Left lung (tissue), 14 donors: ENCODE measurements at regions of chr17 and their contacts with region 1.

Region 1: GRCh38 chr17:39636927-39637736 is at the start of gene STARD3:
- DNase-seq: peak; percentile 85 to 99 (median 93)
- ATAC-seq: peak; percentile 95
- H3K4me3 ChIP-seq: peak within 1 kb of the TSS; percentile 66 to 77
- H3K27ac ChIP-seq: peak within 1 kb of the TSS; percentile 77 to 89
- H3K4me1 ChIP-seq: peaks cover 23 to 76% of the 10 kb centered on the region in 2 donors
- H3K27me3 ChIP-seq: peaks cover 0 to 2% of the 10 kb centered on the region in 2 donors
- CTCF ChIP-seq: peak in 1 of 2 donors; percentile 10
- polyA plus RNA-seq, gene STARD3: 42.1 to 61.5 (median 53.5) TPM

Region 2: GRCh38 chr17:39573447-39574298 is 63.5 kb before region 1 on chr17:
- intact Hi-C with region 1: no loop called
- DNase-seq: peak; percentile 65 to 90 (median 75)
- ATAC-seq: peak; percentile 97
- H3K4me3 ChIP-seq: peak overlapping the region; percentile 51 to 53
- H3K27ac ChIP-seq: peak overlapping the region; percentile 73 to 81
- H3K4me1 ChIP-seq: peaks cover 5 to 14% of the 10 kb centered on the region in 2 donors
- H3K27me3 ChIP-seq: peaks cover 0 to 15% of the 10 kb centered on the region in 2 donors
- CTCF ChIP-seq: no peak

Region 3: GRCh38 chr17:39730095-39730921 is 93.2 kb after region 1 on chr17 and contains the start of gene MIEN1:
- intact Hi-C with region 1: loop called in 1 of 2 experiments (anchors 10 kb)
- DNase-seq: peak; percentile 83 to 98 (median 92)
- ATAC-seq: peak; percentile 98
- H3K4me3 ChIP-seq: peak within 1 kb of the TSS; percentile 75 to 78
- H3K27ac ChIP-seq: peak within 1 kb of the TSS; percentile 89 to 93
- H3K4me1 ChIP-seq: peaks cover 6 to 18% of the 10 kb centered on the region in 2 donors
- H3K27me3 ChIP-seq: peaks cover 0 to 5% of the 10 kb centered on the region in 2 donors
- CTCF ChIP-seq: peak; percentile 89 to 93
- polyA plus RNA-seq, gene MIEN1: 18.8 to 27.5 (median 24.0) TPM